Natural killer cell (primary cell): ENCODE measurements at regions of chr3 and their contacts with region 1.

Region 1: GRCh38 chr3:107660306-107660976 is 137.7 kb downstream of the BBX start:
- DNase-seq: peak in 1 of 2 donors; percentile 64
- ATAC-seq: peak in 2 of 3 donors; percentile 36 to 44
- H3K4me3 ChIP-seq: no peak overlapping the region
- H3K4me3 Mint-ChIP-seq: no peak overlapping the region
- H3K27ac ChIP-seq: no peak overlapping the region
- H3K27ac Mint-ChIP-seq: no peak overlapping the region
- H3K4me1 ChIP-seq: no peaks in the 10 kb centered on the region
- H3K4me1 Mint-ChIP-seq: peaks cover 10 to 25% of the 10 kb centered on the region in 2 donors
- H3K27me3 ChIP-seq: no peaks in the 10 kb centered on the region
- H3K27me3 Mint-ChIP-seq: no peaks in the 10 kb centered on the region
- CTCF ChIP-seq: peak; percentile 39

Region 2: GRCh38 chr3:107927361-107928083 is 267.1 kb after region 1 on chr3:
- intact Hi-C with region 1: loop called (anchors 5 kb)
- DNase-seq: peak; percentile 55 to 80
- ATAC-seq: peak; percentile 85 to 97 (median 95)
- H3K4me3 ChIP-seq: peak overlapping the region; percentile 47
- H3K4me3 Mint-ChIP-seq: peak overlapping the region; percentile 86
- H3K27ac ChIP-seq: no peak overlapping the region
- H3K27ac Mint-ChIP-seq: peak overlapping the region in 1 of 2 donors; percentile 63
- H3K4me1 ChIP-seq: peaks cover 10% of the 10 kb centered on the region
- H3K4me1 Mint-ChIP-seq: peaks cover 8 to 14% of the 10 kb centered on the region in 2 donors
- H3K27me3 ChIP-seq: peaks cover 12% of the 10 kb centered on the region
- H3K27me3 Mint-ChIP-seq: peaks cover 12 to 19% of the 10 kb centered on the region in 2 donors
- CTCF ChIP-seq: peak; percentile 96